ENCODE measurements at regions of chr12 and their contacts with region 1.

Region 1: DNA sequence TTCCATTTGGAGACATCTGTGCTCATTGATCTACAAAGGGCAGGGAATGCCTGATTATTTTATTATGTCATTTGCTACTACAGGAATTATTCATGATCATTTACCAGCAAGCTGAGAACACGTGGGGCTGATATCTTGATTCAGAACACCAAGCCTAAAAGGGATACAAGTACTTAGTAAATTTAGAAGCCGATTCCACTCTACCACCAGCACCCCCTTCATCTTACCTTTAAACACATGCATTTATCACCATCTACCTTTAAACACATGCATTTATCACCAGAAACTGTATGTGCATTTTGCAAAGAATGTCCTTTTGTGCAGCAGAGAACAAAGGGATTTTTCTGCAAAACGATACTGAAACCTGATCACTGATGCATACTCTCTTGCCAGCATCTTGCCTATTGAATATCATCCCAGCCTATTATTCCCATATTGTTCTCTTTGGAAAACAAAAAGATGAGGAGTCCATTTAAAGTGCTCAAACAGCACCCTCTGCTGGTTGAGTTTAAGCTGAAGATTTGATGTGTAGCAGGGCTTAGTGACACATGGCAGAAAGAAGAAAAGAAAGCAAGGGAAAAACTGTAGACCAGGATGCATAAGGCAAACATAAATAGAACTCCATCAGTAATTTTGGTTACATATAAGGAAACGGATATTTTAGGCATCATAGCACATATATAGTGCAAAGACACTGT is 132.6 kb upstream of the PLEKHG7 start:
- DNase-seq: no peak
- ATAC-seq: peak; percentile 73 to 77
- H3K4me3 ChIP-seq: no peak overlapping the region
- H3K27ac ChIP-seq: no peak overlapping the region
- H3K4me1 ChIP-seq: peaks cover 4% of the 10 kb centered on the region
- H3K27me3 ChIP-seq: no peaks in the 10 kb centered on the region

Region 2: DNA sequence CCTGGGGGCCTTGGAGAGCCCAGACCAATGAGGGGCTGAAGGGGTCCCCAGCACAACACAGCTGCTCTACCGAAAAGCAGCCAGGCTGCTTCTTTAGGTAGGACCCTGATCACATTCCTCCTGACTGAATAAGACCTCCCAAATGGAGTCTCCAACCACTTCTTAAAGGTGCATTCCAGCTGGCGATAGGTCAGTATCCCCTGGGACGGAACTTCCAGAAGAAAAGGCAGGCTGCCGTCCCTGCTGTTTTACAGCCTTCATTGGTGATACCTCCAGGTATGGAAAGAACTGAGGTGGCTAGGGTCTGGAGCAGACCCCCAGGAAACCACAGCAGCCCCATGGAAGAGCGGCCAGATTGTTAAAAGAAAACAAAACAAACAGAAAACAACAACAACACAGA is 765.2 kb before region 1 on chr12:
- intact Hi-C with region 1: loop called in 3 of 4 experiments (anchors 5 kb)
- DNase-seq: no peak
- ATAC-seq: no peak
- H3K4me3 ChIP-seq: no peak overlapping the region
- H3K27ac ChIP-seq: no peak overlapping the region
- H3K4me1 ChIP-seq: no peaks in the 10 kb centered on the region
- H3K27me3 ChIP-seq: no peaks in the 10 kb centered on the region

Region 3: DNA sequence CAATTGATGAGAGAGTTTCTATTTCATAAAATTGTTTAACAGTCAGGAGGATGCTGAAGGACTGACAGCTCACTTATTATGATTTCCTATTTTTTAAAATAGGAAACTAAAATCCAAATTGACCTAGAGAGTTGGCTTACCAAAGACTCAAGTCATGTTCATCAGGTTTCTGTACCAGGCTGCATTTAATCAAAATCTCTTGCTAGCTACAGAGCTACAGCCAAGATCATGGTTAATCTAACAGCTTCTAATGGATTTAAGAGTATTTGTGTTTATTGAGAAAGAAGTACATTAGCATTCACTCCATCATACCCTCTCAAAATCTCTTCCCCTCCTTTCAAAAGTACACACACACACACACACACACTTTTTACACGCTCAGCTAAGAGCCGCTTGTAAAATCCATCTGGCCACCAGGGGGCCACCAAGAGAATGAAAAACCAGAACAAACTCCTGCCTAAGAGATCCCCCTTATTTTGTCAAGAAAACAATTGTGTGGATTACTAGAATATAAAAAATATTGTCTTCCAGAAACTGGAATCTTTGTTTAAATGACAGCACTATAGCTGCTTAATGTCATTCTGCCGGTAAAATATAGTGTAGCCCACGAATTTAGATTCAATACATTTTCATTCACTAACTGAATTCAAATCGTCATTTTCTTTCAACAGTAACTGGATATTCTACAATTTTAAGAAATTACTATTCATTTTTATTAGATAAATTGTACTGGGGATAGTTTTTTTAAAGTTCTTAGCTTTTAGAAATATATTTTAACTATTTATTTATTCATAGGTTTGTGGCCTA is 758.5 kb before region 1 on chr12:
- intact Hi-C with region 1: loop called in 3 of 4 experiments (anchors 5 kb)
- DNase-seq: peak; percentile 67 to 91 (median 87)
- ATAC-seq: peak; percentile 66 to 76
- H3K4me3 ChIP-seq: no peak overlapping the region
- H3K27ac ChIP-seq: no peak overlapping the region
- H3K4me1 ChIP-seq: no peaks in the 10 kb centered on the region
- H3K27me3 ChIP-seq: no peaks in the 10 kb centered on the region

Measured in right cardiac atrium (tissue), 5 donors.